ENCODE measurements at regions of chr1 and their contacts with region 1.

Region 1: GRCh38 chr1:202599677-202600431 is 110.4 kb downstream of the SYT2 start:
- DNase-seq: peak in 3 of 4 donors; percentile 56 to 81 (median 75)
- ATAC-seq: peak; percentile 96
- H3K4me3 ChIP-seq: no peak overlapping the region
- H3K27ac ChIP-seq: no peak overlapping the region
- H3K4me1 ChIP-seq: no peaks in the 10 kb centered on the region
- H3K27me3 ChIP-seq: peaks cover 0 to 86% of the 10 kb centered on the region in 2 donors
- CTCF ChIP-seq: peak; percentile 48 to 67

Region 2: DNA sequence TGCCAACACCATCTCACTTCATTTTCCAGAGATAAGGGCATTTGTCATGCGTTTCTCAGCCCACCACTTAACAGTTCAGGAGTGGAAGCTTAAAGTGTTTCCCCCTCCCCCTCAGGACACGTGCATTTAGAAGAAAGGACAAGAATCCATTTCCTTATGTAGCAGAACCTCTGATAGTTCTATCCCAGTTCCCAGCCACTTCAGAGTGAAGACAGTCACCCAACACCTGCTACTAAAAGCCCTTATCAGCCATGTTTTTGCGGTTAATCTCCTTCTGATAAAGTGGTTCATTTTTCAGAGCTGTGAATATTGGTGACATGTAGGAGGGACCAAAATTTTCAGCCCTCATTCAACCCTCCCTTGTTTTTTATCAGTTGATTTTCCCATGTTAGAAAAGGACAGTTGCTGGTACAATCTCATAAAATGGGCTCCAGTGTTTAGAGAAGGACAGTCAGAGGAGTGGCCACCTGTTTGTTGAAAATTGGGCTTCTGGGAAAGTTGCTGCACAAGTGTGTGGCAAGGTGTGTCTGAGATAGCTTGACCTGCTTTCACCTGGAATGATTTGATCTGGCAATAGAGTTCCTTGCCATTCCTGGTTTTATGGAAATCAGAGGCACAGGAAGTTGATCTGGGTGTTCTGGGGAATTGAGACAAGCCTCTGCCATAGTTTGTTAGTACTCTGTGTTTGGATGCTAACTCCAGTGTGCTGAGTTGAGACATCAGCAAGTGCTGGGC is 137.3 kb before region 1 on chr1:
- intact Hi-C with region 1: loop called in 1 of 2 experiments (anchors 10 kb)
- DNase-seq: no peak
- ATAC-seq: peak; percentile 49
- H3K4me3 ChIP-seq: no peak overlapping the region
- H3K27ac ChIP-seq: peak overlapping the region; percentile 30 to 57
- H3K4me1 ChIP-seq: peaks cover 8 to 17% of the 10 kb centered on the region in 2 donors
- H3K27me3 ChIP-seq: peaks cover 0 to 5% of the 10 kb centered on the region in 2 donors
- CTCF ChIP-seq: no peak

Region 3: DNA sequence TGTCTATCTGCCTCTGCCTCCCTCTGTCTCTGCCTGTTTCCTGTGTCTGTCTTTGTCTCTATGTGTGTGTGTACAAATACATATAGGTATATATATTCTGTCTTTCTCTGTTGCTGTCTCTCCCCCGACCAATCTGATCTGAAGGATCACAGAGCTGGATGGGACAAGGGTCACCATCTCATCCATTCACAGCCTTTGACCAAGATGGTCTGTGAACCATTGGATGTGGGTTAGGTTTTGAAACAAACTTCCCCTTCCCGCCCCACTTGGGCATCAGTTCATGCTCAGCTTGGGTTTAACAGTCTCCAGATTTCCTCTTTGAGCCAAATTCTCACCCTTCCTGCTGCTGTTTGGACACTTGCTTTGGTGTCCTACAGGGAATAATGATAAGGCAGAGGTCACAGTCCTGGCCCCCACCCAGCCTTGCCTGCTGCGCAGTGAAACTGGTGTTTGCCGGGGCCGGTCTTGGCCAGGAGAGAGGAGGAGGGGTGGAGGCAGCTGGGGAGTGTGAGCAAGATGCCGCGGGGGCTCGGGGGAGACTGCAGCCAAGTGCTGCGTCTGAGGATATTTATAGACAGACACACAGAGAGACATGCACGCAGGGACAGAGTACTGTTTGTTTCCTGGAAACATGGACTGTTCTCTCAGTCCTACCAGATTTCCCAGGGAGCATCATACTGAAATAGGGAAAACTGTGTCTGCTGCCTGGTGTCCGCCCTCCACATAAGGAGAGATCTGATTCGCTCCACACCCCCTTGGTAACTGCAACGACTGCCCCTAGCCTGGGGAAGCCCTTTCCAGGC is 678.4 kb after region 1 on chr1:
- intact Hi-C with region 1: no loop called
- DNase-seq: peak; percentile 72 to 89 (median 79)
- ATAC-seq: peak; percentile 58
- H3K4me3 ChIP-seq: no peak overlapping the region
- H3K27ac ChIP-seq: peak overlapping the region; percentile 71 to 79
- H3K4me1 ChIP-seq: peaks cover 5 to 76% of the 10 kb centered on the region in 2 donors
- H3K27me3 ChIP-seq: no peaks in the 10 kb centered on the region
- CTCF ChIP-seq: no peak